ENCODE measurements at regions of chr1 and their contacts with region 1.

Region 1: GRCh38 chr1:224454397-224455066 is 19.9 kb upstream of the WDR26 start:
- DNase-seq: no peak
- H3K4me3 ChIP-seq: no peak overlapping the region
- H3K4me3 Mint-ChIP-seq: no peak overlapping the region
- H3K27ac ChIP-seq: no peak overlapping the region
- H3K27ac Mint-ChIP-seq: peak overlapping the region in 4 of 7 donors; percentile 14 to 74 (median 60)
- H3K4me1 ChIP-seq: peaks cover 14% of the 10 kb centered on the region
- H3K4me1 Mint-ChIP-seq: peaks cover 10 to 24% (median 17%) of the 10 kb centered on the region in 4 donors
- H3K27me3 ChIP-seq: no peaks in the 10 kb centered on the region
- H3K27me3 Mint-ChIP-seq: no peaks in the 10 kb centered on the region

Region 2: GRCh38 chr1:223811634-223812415 is 642.7 kb before region 1 on chr1:
- CTCF ChIA-PET with region 1: no interaction called
- POLR2A ChIA-PET with region 1: no interaction called
- intact Hi-C with region 1: loop called (anchors 5 kb)
- DNase-seq: peak in 4 of 5 donors; percentile 40 to 51 (median 47)
- H3K4me3 ChIP-seq: no peak overlapping the region
- H3K4me3 Mint-ChIP-seq: no peak overlapping the region
- H3K27ac ChIP-seq: no peak overlapping the region
- H3K27ac Mint-ChIP-seq: peak overlapping the region in 3 of 7 donors; percentile 27 to 72 (median 57)
- H3K4me1 ChIP-seq: peaks cover 17% of the 10 kb centered on the region
- H3K4me1 Mint-ChIP-seq: peaks cover 23 to 37% (median 32%) of the 10 kb centered on the region in 4 donors
- H3K27me3 ChIP-seq: no peaks in the 10 kb centered on the region
- H3K27me3 Mint-ChIP-seq: no peaks in the 10 kb centered on the region

Region 3: GRCh38 chr1:224356685-224357625 is 97.6 kb before region 1 on chr1 and contains the start of gene CNIH4:
- CTCF ChIA-PET with region 1: interaction called, 5 read pairs
- POLR2A ChIA-PET with region 1: no interaction called
- intact Hi-C with region 1: loop called (anchors 1 kb)
- DNase-seq: peak; percentile 92 to 95 (median 94)
- H3K4me3 ChIP-seq: peak within 1 kb of the TSS; percentile 51 to 63
- H3K4me3 Mint-ChIP-seq: peak within 1 kb of the TSS; percentile 90 to 99 (median 94)
- H3K27ac ChIP-seq: peak within 1 kb of the TSS; percentile 72
- H3K27ac Mint-ChIP-seq: peak within 1 kb of the TSS; percentile 73 to 98 (median 93)
- H3K4me1 ChIP-seq: peaks cover 27% of the 10 kb centered on the region
- H3K4me1 Mint-ChIP-seq: peaks cover 26 to 54% (median 39%) of the 10 kb centered on the region in 4 donors
- H3K27me3 ChIP-seq: no peaks in the 10 kb centered on the region
- H3K27me3 Mint-ChIP-seq: no peaks in the 10 kb centered on the region
- total RNA-seq, gene CNIH4: 45.5 to 50.9 TPM

Region 4: DNA sequence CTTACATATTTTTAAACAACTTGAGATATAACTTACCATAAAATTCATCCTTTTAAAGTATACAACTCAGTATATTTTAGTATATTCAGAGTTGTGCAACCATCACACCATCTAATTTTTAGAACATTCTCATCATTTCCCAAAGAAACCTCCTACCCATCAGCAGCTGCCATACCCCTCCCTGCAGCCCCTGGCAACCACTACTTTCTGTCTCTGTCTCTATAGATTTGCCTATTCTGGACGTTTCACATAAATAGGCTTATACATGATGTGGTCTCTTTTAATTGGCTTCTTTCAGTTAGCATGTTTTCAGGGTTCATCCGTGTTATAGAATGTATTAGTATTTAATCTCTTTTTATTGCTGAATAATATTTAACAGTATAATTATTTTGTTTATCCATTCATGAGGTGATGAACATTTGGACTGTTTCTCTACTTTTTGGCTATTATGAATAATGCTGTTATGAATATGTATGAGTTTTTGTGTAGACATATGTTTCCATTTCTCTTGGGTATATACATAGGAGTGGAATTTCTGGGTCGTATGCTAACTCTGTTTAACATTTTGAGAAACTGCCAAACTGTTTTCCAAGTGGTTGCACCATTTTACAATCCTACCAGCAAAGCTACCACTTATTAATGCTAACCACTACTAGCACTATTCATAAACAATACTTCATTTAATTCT is 49.5 kb before region 1 on chr1:
- CTCF ChIA-PET with region 1: interaction called, 13 read pairs
- POLR2A ChIA-PET with region 1: interaction called, 3 read pairs
- intact Hi-C with region 1: no loop called
- DNase-seq: no peak
- H3K4me3 ChIP-seq: no peak overlapping the region
- H3K4me3 Mint-ChIP-seq: peak overlapping the region in 1 of 8 donors; percentile 29
- H3K27ac ChIP-seq: no peak overlapping the region
- H3K27ac Mint-ChIP-seq: peak overlapping the region in 6 of 7 donors; percentile 18 to 89 (median 56)
- H3K4me1 ChIP-seq: peaks cover 9% of the 10 kb centered on the region
- H3K4me1 Mint-ChIP-seq: peaks cover 24 to 51% (median 36%) of the 10 kb centered on the region in 4 donors
- H3K27me3 ChIP-seq: no peaks in the 10 kb centered on the region
- H3K27me3 Mint-ChIP-seq: no peaks in the 10 kb centered on the region

Region 5: DNA sequence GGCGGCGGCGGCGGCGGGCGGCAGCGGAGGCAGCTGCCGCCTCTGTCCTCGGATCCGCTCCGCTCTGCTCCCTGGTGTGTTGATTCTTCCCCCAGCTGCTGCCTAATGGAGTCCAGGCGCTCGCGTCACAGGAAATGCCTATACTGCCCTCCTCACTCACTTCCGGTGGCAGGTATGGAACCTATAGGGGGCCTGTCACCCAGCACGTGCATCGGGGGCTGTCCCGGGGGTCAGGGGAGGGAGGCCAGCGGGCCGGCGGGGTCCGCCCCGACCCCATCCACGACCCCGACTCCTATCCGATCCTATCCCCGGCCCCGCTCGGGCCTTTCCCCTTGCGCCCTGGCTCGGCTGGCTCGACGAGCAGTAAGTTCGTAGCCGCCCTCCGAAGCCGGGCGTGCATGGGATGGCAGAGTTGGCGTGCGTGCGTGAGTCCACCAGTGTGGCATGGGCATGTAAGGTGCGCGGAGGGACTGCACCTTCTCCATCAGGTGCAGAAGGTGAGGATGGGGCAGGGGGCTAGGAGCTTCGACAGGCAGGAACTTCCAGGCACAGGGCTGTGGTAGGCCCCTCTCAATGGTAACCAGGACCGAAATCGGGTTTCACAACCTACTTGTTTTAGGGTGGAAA is 19.7 kb before region 1 on chr1 and contains the start of gene WDR26:
- CTCF ChIA-PET with region 1: interaction called, 79 read pairs
- POLR2A ChIA-PET with region 1: interaction called, 26 read pairs
- intact Hi-C with region 1: loop called (anchors 1 kb)
- DNase-seq: peak; percentile 85 to 93 (median 87)
- H3K4me3 ChIP-seq: peak within 1 kb of the TSS; percentile 73 to 96
- H3K4me3 Mint-ChIP-seq: peak within 1 kb of the TSS; percentile 93 to 97 (median 97)
- H3K27ac ChIP-seq: peak within 1 kb of the TSS; percentile 94
- H3K27ac Mint-ChIP-seq: peak within 1 kb of the TSS; percentile 97 to 99 (median 99)
- H3K4me1 ChIP-seq: peaks cover 57% of the 10 kb centered on the region
- H3K4me1 Mint-ChIP-seq: peaks cover 39 to 69% (median 49%) of the 10 kb centered on the region in 4 donors
- H3K27me3 ChIP-seq: no peaks in the 10 kb centered on the region
- H3K27me3 Mint-ChIP-seq: no peaks in the 10 kb centered on the region
- total RNA-seq, gene WDR26: 121 to 123 TPM

Region 6: DNA sequence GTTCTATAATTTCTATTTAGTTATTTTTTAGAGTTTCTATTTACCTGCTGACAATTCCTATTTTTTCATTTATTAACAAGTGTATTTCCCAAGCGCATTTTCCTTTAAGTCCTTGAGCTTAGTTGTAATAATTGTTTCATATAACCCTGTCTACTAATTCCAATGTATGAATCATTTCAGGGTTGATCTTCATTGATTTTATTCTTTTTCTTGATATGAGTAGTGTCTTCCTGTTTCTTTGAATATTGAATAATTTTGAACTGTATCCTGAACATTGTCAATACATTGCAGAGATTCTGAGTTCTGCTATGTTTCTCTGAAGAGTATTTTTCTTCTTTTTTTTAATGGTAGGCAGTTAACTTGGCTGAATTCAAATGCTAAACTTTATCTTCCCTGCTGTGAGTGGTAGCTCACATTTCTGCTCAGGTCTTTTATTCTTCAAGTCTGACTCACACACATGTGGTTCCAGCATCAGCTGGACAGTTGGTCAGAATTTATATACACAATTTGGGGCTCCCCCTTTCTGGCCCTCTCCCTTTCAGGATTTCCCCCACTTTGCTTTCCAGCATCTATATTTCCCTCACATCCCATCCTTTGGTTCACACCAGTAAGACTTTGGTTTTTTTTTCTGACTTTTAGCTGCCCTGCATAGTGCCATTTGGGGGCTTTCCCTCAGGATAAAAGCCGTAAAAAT is 34.4 kb after region 1 on chr1:
- CTCF ChIA-PET with region 1: no interaction called
- POLR2A ChIA-PET with region 1: no interaction called
- intact Hi-C with region 1: no loop called
- DNase-seq: no peak
- H3K4me3 ChIP-seq: no peak overlapping the region
- H3K4me3 Mint-ChIP-seq: no peak overlapping the region
- H3K27ac ChIP-seq: no peak overlapping the region
- H3K27ac Mint-ChIP-seq: no peak overlapping the region
- H3K4me1 ChIP-seq: no peaks in the 10 kb centered on the region
- H3K4me1 Mint-ChIP-seq: peaks cover 0 to 1% (median 0%) of the 10 kb centered on the region in 4 donors
- H3K27me3 ChIP-seq: no peaks in the 10 kb centered on the region
- H3K27me3 Mint-ChIP-seq: peaks cover 0 to 5% of the 10 kb centered on the region in 2 donors

Measured in CD4-positive, alpha-beta memory T cell (primary cell).